ENCODE measurements at regions of chr1 and their contacts with region 1.

Region 1: DNA sequence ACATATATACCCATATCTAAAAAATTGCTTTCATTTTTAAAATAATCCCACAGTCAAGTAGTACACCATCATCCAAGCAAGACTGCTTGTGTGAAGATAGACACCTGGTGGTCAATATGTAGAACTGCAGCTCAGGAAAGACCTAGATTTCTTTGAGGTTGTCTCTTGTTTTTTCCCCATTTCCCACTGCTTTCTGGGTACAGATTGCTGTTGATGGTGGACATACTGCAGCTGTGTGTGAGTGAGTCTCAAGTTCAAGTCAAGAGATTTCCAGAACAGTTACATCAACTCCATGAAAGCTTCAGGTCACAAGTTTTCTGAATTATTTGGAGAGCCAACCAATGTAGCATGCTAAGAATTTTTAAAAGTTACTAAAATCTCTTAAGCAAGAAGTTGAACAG is 306.4 kb downstream of the DUSP10 start:
- DNase-seq: peak in 4 of 5 donors; percentile 34 to 45 (median 36)
- H3K4me3 ChIP-seq: no peak overlapping the region
- H3K4me3 Mint-ChIP-seq: peak overlapping the region in 1 of 8 donors; percentile 22
- H3K27ac ChIP-seq: no peak overlapping the region
- H3K27ac Mint-ChIP-seq: no peak overlapping the region
- H3K4me1 ChIP-seq: peaks cover 16% of the 10 kb centered on the region
- H3K4me1 Mint-ChIP-seq: peaks cover 13 to 29% (median 19%) of the 10 kb centered on the region in 4 donors
- H3K27me3 ChIP-seq: no peaks in the 10 kb centered on the region
- H3K27me3 Mint-ChIP-seq: peaks cover 0 to 4% of the 10 kb centered on the region in 2 donors

Region 2: GRCh38 chr1:220810179-220810653 is 625.3 kb before region 1 on chr1:
- CTCF ChIA-PET with region 1: interaction called, 6 read pairs
- POLR2A ChIA-PET with region 1: no interaction called
- intact Hi-C with region 1: loop called (anchors 1 kb)
- DNase-seq: peak; percentile 55 to 66 (median 59)
- H3K4me3 ChIP-seq: no peak overlapping the region
- H3K4me3 Mint-ChIP-seq: peak overlapping the region in 7 of 8 donors; percentile 50 to 69 (median 55)
- H3K27ac ChIP-seq: no peak overlapping the region
- H3K27ac Mint-ChIP-seq: peak overlapping the region in 1 of 7 donors; percentile 66
- H3K4me1 ChIP-seq: no peaks in the 10 kb centered on the region
- H3K4me1 Mint-ChIP-seq: peaks cover 1 to 8% (median 4%) of the 10 kb centered on the region in 4 donors
- H3K27me3 ChIP-seq: no peaks in the 10 kb centered on the region
- H3K27me3 Mint-ChIP-seq: peaks cover 16 to 24% of the 10 kb centered on the region in 2 donors

Region 3: GRCh38 chr1:220873868-220874655 is 561.4 kb before region 1 on chr1:
- CTCF ChIA-PET with region 1: no interaction called
- POLR2A ChIA-PET with region 1: no interaction called
- intact Hi-C with region 1: loop called (anchors 1 kb)
- DNase-seq: no peak
- H3K4me3 ChIP-seq: no peak overlapping the region
- H3K4me3 Mint-ChIP-seq: no peak overlapping the region
- H3K27ac ChIP-seq: no peak overlapping the region
- H3K27ac Mint-ChIP-seq: no peak overlapping the region
- H3K4me1 ChIP-seq: peaks cover 13% of the 10 kb centered on the region
- H3K4me1 Mint-ChIP-seq: peaks cover 9 to 18% (median 13%) of the 10 kb centered on the region in 4 donors
- H3K27me3 ChIP-seq: peaks cover 9% of the 10 kb centered on the region
- H3K27me3 Mint-ChIP-seq: peaks cover 41 to 47% of the 10 kb centered on the region in 2 donors

Region 4: DNA sequence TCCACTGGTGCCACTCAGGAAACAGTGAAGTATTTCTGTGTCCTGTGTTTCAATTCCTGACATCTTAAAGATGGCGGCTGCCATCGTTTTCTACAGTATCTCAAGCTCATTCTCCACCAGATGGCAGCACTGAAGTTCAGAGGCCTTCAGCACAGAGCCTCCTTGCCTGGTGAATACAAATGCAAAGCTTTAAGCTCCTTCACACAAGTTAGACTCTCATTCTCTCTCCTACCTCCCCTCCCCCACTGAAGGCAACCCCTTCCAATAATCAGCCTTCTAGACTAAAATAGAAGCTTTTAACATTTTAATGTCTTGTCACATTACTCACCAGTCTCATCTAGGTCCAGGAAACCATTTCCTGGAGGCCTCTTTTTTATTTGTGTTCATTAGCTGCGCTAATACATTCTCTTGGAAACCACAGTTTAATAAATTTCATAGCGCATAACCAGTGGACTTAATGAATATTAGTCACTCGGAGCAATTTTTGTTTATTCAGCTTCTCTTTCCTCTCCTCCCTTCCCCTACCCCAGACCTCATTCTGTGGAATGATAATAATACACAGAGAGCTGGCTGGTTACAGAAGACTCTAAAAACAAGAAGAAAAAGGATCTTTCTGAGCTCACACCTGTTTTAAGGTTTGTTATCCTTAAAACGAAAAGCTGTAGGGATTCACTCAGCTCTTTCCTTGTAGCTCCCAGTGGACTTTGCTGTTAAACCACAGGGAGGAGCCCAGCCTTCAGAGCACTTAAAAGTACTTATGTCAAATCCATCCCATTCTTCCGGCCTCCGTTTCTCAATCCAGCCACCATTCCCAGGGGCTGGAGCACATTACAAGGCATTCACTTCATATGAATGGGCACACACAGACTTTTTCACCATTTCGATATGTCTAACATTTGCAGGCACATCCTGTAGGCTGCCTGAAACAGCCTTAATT is 171.4 kb before region 1 on chr1:
- CTCF ChIA-PET with region 1: interaction called, 12 read pairs
- POLR2A ChIA-PET with region 1: no interaction called
- intact Hi-C with region 1: no loop called
- DNase-seq: peak; percentile 4 to 41 (median 11)
- H3K4me3 ChIP-seq: no peak overlapping the region
- H3K4me3 Mint-ChIP-seq: no peak overlapping the region
- H3K27ac ChIP-seq: no peak overlapping the region
- H3K27ac Mint-ChIP-seq: no peak overlapping the region
- H3K4me1 ChIP-seq: no peaks in the 10 kb centered on the region
- H3K4me1 Mint-ChIP-seq: no peaks in the 10 kb centered on the region
- H3K27me3 ChIP-seq: no peaks in the 10 kb centered on the region
- H3K27me3 Mint-ChIP-seq: peaks cover 2 to 5% of the 10 kb centered on the region in 2 donors

Region 5: GRCh38 chr1:221693087-221693486 is 257.6 kb after region 1 on chr1:
- CTCF ChIA-PET with region 1: no interaction called
- POLR2A ChIA-PET with region 1: no interaction called
- intact Hi-C with region 1: no loop called
- DNase-seq: no peak
- H3K4me3 ChIP-seq: no peak overlapping the region
- H3K4me3 Mint-ChIP-seq: no peak overlapping the region
- H3K27ac ChIP-seq: no peak overlapping the region
- H3K27ac Mint-ChIP-seq: no peak overlapping the region
- H3K4me1 ChIP-seq: peaks cover under 1% of the 10 kb centered on the region
- H3K4me1 Mint-ChIP-seq: peaks cover 3 to 17% (median 6%) of the 10 kb centered on the region in 4 donors
- H3K27me3 ChIP-seq: no peaks in the 10 kb centered on the region
- H3K27me3 Mint-ChIP-seq: no peaks in the 10 kb centered on the region